ENCODE measurements at regions of chr12 and their contacts with region 1.

Region 1: DNA sequence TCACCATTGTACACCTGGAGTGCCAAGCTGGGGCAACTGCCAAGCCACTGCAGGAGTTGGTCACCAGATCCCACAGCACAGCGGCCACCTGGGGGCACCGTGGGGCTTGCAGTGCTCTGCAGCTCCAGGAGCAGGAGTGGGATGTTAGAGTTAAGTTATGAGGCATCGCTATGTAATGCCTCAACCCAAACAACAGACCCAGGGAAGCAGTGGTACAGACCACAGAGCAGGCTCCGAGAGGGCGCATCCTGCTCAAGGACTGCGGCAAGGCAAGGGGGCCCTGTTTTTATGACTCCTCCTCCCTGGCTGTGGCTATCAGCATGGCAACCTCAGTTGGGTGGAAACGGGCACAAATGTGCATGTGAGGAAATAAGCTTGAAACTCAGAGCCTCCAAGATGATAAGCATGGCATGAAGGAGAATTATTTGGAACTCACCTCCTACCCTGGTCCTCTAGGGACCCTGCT is 63.1 kb downstream of the ARL6IP4 start:
- DNase-seq: peak; percentile 87
- H3K4me3 ChIP-seq: no peak overlapping the region
- CTCF ChIP-seq: peak; percentile 93

Region 2: DNA sequence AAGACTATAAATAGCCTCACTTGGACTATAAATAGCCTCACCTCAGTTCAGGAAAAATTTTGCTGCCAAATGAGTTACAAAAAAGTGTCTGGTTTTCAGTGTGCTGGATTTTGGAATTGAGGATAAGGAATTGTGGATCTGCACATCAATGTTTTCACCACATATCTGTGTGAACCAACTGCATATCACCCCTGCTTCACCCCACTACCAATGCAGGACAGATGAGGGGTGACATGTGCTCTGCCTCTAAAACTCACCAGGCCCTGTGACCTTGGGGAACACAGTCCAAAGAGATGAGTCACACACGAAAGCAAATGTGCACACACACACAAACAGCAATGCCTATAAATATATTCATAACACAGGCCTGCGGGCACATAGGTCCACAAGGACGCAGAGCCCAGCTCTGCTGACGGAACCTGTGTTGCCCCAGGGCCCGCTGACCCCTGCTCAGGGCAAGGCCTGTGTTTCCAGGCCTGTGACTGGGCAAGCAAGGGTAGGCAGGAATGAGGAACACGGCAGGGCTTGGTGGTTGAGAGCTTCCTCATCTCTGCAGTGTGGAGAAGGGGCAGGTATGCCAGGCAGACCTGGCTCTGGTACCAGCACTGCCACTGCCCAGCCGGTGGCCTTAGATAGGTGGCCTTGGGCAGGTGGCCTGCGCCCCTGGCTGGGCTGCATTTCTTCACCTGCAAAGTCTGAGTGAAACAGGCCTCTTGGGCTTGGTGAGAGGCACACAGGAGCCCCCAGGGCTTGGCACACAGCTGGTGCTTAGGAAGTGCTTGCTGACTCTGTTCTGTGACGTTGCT is 19.3 kb after region 1 on chr12:
- CTCF ChIA-PET with region 1: interaction called, 37 read pairs
- POLR2A ChIA-PET with region 1: no interaction called
- DNase-seq: no peak
- H3K4me3 ChIP-seq: no peak overlapping the region
- CTCF ChIP-seq: no peak

Region 3: GRCh38 chr12:123150744-123151456 is 107.3 kb after region 1 on chr12 and contains the start of gene PITPNM2:
- CTCF ChIA-PET with region 1: interaction called, 36 read pairs
- POLR2A ChIA-PET with region 1: interaction called, 6 read pairs
- DNase-seq: no peak
- H3K4me3 ChIP-seq: peak within 1 kb of the TSS; percentile 62
- CTCF ChIP-seq: no peak